Common myeloid progenitor, CD34-positive (primary cell): ENCODE measurements at regions of chr9 and their contacts with region 1.

Region 1: GRCh38 chr9:6584881-6585597 is 60.5 kb downstream of the GLDC start:
- DNase-seq: peak; percentile 36 to 68 (median 54)
- H3K4me3 ChIP-seq: no peak overlapping the region
- H3K27ac ChIP-seq: no peak overlapping the region
- H3K4me1 ChIP-seq: no peaks in the 10 kb centered on the region
- H3K27me3 ChIP-seq: no peaks in the 10 kb centered on the region

Region 2: DNA sequence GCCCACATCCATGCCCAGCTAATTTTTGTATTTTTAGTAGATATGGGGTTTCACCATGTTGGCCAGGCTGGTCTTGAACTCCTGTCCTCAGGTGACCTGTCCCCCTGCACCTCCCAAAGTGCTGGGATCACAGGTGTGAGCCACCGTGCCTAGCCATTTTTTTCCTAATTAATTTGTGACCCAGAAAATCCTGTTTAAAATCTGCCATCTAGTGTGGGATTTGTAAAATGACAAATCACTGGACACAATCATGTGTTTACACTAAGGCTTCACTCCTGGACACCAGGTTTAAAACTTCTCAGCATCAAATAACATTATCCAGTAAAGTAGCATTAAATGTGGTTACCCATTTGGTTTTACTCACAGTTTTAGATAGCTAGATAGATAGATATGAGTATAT is 154.2 kb after region 1 on chr9:
- CTCF ChIA-PET with region 1: interaction called, 15 read pairs
- POLR2A ChIA-PET with region 1: no interaction called
- DNase-seq: peak in 2 of 3 donors; percentile 22 to 28
- H3K4me3 ChIP-seq: no peak overlapping the region
- H3K27ac ChIP-seq: no peak overlapping the region
- H3K4me1 ChIP-seq: no peaks in the 10 kb centered on the region
- H3K27me3 ChIP-seq: no peaks in the 10 kb centered on the region